ENCODE measurements at regions of chr4 and their contacts with region 1.

Region 1: GRCh38 chr4:48093949-48094550 is 40.0 kb downstream of the TXK start:
- DNase-seq: peak; percentile 13 to 41 (median 20)
- ATAC-seq: peak; percentile 91
- H3K4me3 ChIP-seq: no peak overlapping the region
- H3K27ac ChIP-seq: peak overlapping the region in 1 of 4 donors; percentile 51
- H3K4me1 ChIP-seq: no peaks in the 10 kb centered on the region
- H3K27me3 ChIP-seq: no peaks in the 10 kb centered on the region
- CTCF ChIP-seq: no peak
- POLR2A ChIP-seq: no peak

Region 2: GRCh38 chr4:47741200-47741599 is 352.9 kb before region 1 on chr4:
- intact Hi-C with region 1: no loop called
- DNase-seq: no peak
- ATAC-seq: no peak
- H3K4me3 ChIP-seq: no peak overlapping the region
- H3K27ac ChIP-seq: no peak overlapping the region
- H3K4me1 ChIP-seq: peaks cover 6% of the 10 kb centered on the region
- H3K27me3 ChIP-seq: no peaks in the 10 kb centered on the region
- CTCF ChIP-seq: no peak
- POLR2A ChIP-seq: no peak

Region 3: GRCh38 chr4:48008021-48008596 is 85.9 kb before region 1 on chr4:
- intact Hi-C with region 1: loop called (anchors 10 kb)
- DNase-seq: no peak
- ATAC-seq: no peak
- H3K4me3 ChIP-seq: no peak overlapping the region
- H3K27ac ChIP-seq: no peak overlapping the region
- H3K4me1 ChIP-seq: no peaks in the 10 kb centered on the region
- H3K27me3 ChIP-seq: no peaks in the 10 kb centered on the region
- CTCF ChIP-seq: no peak
- POLR2A ChIP-seq: no peak